ENCODE measurements at regions of chr1 and their contacts with region 1.

Region 1: GRCh38 chr1:171984850-171985485 is 143.7 kb downstream of the DNM3 start:
- DNase-seq: peak; percentile 55

Region 2: GRCh38 chr1:171623651-171624331 is 361.2 kb before region 1 on chr1:
- in situ Hi-C with region 1: no loop called
- DNase-seq: no peak

Region 3: DNA sequence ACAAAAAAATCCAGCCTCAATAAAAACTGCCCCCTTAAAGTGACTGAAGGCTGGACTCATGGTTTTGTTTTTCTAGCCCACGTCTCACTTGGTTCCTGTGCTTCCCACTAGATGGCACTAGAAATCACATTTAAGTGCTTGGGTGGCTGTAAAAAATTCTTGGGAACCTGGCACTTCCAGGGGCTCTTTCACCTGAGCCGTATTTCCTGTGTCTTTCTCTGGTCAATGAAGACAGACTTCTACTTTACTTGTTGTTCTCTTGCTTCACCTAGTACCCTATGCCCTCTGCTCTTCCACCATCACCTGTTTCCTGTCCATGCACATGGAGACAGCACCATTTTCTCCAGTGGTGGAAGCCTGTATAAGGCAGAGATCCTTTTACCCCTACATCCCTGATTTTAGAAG is 183.5 kb before region 1 on chr1:
- in situ Hi-C with region 1: loop called (anchors 10 kb)
- DNase-seq: peak; percentile 69

Measured in SK-MEL-5 (cell line).